Activated CD4-positive, alpha-beta memory T cell treated with anti-CD3 and anti-CD28 coated beads for 36 hours (primary cell): ENCODE measurements at regions of chr19 and their contacts with region 1.

Region 1: DNA sequence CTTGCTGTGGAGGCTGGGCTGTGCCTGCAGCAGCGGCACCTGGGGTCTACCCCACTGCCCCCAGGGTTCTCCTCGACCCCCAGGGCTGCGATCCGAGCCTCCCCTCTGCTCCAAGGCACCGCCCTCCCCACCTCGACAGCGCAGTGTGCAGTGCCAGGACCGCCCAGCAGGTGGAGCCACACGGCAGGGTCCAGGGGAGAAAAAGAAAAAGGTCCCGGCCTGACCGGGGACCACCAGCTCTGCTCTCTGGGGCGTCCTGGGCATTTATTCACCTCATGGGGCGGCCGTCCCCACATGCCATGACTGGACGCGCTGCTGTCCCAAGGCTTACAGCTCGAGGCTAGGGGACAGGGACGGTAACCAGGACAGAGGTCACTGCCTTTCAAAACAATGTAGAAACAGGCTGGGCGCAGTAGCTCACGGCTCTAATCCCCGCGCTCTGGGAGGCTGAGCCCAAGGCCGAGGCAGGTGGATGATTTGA is 10.6 kb downstream of the REXO1 start:
- DNase-seq: peak; percentile 71
- H3K4me3 Mint-ChIP-seq: no peak overlapping the region
- H3K27ac Mint-ChIP-seq: no peak overlapping the region
- H3K4me1 Mint-ChIP-seq: peaks cover 24% of the 10 kb centered on the region
- H3K27me3 Mint-ChIP-seq: no peaks in the 10 kb centered on the region

Region 2: DNA sequence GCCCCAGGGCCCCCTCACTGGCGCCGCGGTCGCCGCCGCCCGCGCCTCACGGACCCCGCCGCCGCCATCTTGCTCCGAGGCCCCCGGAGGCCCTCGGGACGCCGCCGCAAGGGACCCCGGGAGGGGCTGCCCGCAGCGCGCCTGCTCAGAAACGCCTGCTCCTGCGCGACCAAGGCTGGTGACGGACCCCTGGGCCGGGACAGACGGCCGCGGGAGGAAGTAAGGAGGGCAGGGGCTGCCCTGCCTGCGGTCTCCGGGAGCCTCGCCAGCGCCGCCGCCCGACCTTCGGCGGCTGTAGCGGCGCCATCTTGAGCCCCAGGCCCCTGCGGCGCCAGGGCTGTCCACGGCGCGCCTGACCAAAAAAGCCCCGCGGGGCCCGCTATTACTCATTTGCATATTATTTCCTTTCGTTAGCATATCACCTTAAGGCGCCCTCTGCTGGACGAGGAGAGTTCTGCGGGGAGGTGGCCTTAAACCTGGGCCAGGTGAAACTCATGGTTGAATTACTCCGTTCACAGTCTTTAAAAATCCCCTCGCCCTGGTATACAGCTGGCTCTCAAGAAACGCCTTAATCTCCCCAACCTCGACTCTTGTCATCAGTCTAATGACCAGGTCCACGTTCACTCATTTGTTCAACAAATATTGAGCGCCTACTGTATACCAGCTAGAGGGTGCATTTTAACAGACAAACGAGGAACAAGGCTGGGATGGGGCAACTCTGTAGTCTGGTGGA is 10.9 kb after region 1 on chr19 and contains the start of gene REXO1:
- CTCF ChIA-PET with region 1: interaction called, 22 read pairs
- POLR2A ChIA-PET with region 1: no interaction called
- intact Hi-C with region 1: no loop called
- DNase-seq: peak; percentile 98
- H3K4me3 Mint-ChIP-seq: peak within 1 kb of the TSS; percentile 88
- H3K27ac Mint-ChIP-seq: peak within 1 kb of the TSS; percentile 89
- H3K4me1 Mint-ChIP-seq: peaks cover 61% of the 10 kb centered on the region
- H3K27me3 Mint-ChIP-seq: no peaks in the 10 kb centered on the region
- total RNA-seq, gene REXO1: 41.9 to 45.3 TPM

Region 3: DNA sequence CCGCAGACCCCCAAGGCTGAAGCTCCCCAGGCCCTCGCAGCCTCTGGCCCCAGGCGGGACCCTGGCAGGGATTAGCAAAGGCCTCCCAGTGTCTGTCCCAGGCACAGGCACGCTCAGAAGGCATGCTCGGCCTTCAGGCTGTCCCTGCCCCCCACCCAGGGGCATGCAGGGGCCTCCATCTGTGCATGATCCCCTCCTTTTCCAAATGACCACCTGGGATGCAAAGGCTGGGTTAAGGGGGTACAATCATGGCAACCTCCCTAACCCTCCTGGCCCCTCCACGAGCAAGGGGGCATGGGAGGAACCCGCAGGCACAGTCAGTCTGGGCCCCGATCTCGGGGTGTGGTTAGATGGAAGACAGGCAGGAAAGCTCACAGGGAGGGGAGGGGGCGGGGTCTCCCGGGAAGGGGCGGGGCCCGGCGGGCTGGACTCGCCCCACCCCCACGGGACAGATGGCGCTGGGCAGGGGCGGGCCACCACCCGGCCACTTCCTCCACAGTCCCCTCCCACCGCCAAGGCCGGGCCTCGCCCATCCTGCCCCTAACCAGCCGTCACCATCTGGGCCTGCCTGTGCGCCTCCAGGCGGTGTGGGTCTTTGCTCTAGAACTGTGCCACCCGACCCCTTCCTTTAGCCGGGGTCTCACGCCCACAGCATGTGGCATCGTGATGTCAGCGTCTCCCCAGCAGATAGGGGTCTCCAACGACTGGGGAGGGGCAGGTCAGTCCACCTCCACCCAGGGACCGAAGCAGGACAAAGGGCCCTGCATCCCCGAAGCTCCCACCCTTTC is 17.6 kb after region 1 on chr19:
- CTCF ChIA-PET with region 1: interaction called, 19 read pairs
- POLR2A ChIA-PET with region 1: no interaction called
- intact Hi-C with region 1: no loop called
- DNase-seq: peak; percentile 95
- H3K4me3 Mint-ChIP-seq: peak overlapping the region; percentile 80
- H3K27ac Mint-ChIP-seq: peak overlapping the region; percentile 91
- H3K4me1 Mint-ChIP-seq: peaks cover 49% of the 10 kb centered on the region
- H3K27me3 Mint-ChIP-seq: no peaks in the 10 kb centered on the region